ENCODE measurements at regions of chr2 and their contacts with region 1.

Region 1: DNA sequence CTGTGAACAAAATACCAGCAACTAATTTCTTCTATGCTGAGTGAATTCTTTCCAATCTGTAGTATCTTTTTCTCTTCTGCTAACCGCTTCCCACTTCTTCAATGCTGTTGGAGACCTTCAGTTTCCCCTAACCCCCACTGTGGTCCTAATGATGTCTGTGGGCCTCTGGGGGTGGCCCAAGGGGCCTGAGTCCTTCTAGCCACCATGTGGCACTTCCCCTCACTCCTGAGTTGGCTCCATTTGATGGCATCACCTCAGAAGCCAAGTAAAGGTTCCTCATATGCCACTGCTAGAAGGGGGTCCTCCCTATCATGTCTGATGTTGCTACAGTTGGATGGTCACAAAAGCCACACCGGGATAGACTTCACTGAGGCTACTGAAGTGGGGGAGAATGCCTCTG is 37.5 kb downstream of the ARHGAP25 start:
- DNase-seq: no peak
- H3K4me3 ChIP-seq: no peak overlapping the region
- H3K27ac ChIP-seq: peak overlapping the region in 1 of 2 donors; percentile 22
- H3K4me1 ChIP-seq: no peaks in the 10 kb centered on the region
- H3K27me3 ChIP-seq: no peaks in the 10 kb centered on the region
- CTCF ChIP-seq: no peak
- POLR2A ChIP-seq: no peak

Region 2: DNA sequence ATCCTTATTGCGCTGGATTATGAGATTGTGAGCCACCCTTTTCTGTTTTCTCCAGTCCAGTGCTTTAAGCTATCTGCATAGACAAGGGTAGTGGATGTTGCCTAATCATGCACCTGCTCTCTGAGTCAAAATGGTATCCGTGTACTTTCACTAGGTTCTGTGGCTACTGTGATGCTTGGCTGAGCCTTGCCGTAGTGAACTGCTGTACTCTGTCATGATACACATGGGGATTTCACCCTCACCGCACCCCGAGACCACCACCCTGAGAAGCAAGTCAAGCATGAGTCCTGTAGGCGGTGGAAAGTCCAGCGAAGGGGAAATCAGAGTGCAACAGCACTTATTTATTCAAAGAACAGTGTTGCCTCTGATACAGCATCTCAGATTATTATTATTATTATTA is 17.5 kb after region 1 on chr2:
- intact Hi-C with region 1: no loop called
- DNase-seq: no peak
- H3K4me3 ChIP-seq: no peak overlapping the region
- H3K27ac ChIP-seq: no peak overlapping the region
- H3K4me1 ChIP-seq: no peaks in the 10 kb centered on the region
- H3K27me3 ChIP-seq: no peaks in the 10 kb centered on the region
- CTCF ChIP-seq: no peak
- POLR2A ChIP-seq: no peak

Region 3: GRCh38 chr2:68800027-68800401 is 27.9 kb after region 1 on chr2:
- intact Hi-C with region 1: no loop called
- DNase-seq: no peak
- H3K4me3 ChIP-seq: peak overlapping the region in 2 of 3 donors; percentile 0 to 32
- H3K27ac ChIP-seq: peak overlapping the region; percentile 75 to 76
- H3K4me1 ChIP-seq: no peaks in the 10 kb centered on the region
- H3K27me3 ChIP-seq: no peaks in the 10 kb centered on the region
- CTCF ChIP-seq: no peak
- POLR2A ChIP-seq: no peak

Region 4: GRCh38 chr2:68824831-68825230 is 52.7 kb after region 1 on chr2:
- intact Hi-C with region 1: loop called (anchors 2 kb)
- DNase-seq: no peak
- H3K4me3 ChIP-seq: no peak overlapping the region
- H3K27ac ChIP-seq: peak overlapping the region in 1 of 2 donors; percentile 22
- H3K4me1 ChIP-seq: peaks cover 0 to 6% of the 10 kb centered on the region in 2 donors
- H3K27me3 ChIP-seq: no peaks in the 10 kb centered on the region
- CTCF ChIP-seq: no peak
- POLR2A ChIP-seq: no peak